Cardiac septum (tissue), 1 donor: ENCODE measurements at regions of chr11 and their contacts with region 1.

Region 1: DNA sequence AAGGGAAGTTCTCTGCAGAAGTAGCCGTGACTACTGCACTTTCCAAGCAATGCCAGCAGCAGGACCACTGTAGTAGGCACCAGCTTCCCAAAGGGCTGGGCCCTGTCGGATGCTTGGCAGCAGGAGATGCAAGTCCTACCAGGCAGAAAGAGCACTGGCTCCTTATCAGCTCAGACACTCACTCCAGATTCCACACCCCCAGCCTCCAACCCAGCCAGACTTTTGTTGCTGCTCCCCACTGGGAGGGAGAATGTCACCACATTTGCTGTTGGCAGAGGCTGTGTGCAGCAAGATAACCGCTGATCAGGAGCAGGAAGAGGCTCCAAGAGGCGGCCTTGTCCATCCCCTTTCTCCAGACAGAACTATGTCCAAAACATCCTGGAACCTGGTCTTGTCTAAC is 118.7 kb downstream of the C11orf58 start:
- DNase-seq: peak; percentile 84

Region 2: DNA sequence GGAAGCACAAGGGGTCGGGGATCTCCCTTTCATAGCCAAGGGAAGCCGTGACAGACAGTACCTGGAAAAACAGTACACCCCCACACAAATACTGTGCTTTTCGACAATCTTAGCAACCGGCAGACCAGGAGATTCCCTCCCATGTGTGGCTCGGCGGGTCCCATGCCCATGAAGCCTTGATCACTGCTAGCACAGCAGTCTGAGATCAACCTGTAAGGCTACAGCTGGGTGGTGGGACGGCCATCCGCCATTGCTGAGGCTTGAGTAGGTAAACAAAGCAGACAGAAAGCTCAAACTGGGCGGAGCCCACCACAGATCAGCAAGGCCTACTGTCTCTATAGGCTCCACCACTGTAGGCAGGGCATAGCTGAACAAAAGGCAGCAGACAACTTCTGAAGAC is 320.7 kb before region 1 on chr11:
- intact Hi-C with region 1: no loop called
- DNase-seq: no peak

Region 3: GRCh38 chr11:16809886-16810668 is 47.1 kb before region 1 on chr11:
- intact Hi-C with region 1: loop called (anchors 5 kb)
- DNase-seq: peak; percentile 88

Region 4: GRCh38 chr11:16935518-16936302 is 78.5 kb after region 1 on chr11:
- intact Hi-C with region 1: loop called (anchors 2 kb)
- DNase-seq: no peak

Region 5: GRCh38 chr11:17629113-17629512 is 771.9 kb after region 1 on chr11:
- intact Hi-C with region 1: no loop called
- DNase-seq: no peak